Endothelial cell of umbilical vein (primary cell): ENCODE measurements at regions of chr2 and their contacts with region 1.

Region 1: DNA sequence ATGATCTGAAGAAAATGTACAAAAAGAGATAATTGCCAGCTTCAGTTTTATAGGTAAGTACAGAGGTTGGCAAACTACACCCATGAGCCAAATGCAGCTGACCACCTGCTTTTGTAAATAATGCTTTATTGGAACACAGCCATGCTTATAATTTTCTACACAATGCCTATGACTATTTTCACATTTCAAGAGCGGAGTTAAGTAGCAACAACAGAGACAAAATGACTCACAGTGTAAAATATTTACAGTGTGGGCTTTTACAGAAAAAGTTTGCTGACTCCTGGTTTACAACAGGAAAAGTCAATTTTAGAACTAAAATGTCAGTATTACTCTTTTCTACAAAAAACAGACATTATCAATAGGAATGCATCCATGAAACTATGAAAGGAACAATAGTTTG is 26.0 kb downstream of the CWC22 start:
- DNase-seq: peak; percentile 55
- H3K4me3 ChIP-seq: no peak overlapping the region
- H3K27ac ChIP-seq: no peak overlapping the region
- H3K4me1 ChIP-seq: peaks cover 2% of the 10 kb centered on the region
- H3K27me3 ChIP-seq: no peaks in the 10 kb centered on the region
- CTCF ChIP-seq: no peak
- POLR2A ChIP-seq: no peak

Region 2: DNA sequence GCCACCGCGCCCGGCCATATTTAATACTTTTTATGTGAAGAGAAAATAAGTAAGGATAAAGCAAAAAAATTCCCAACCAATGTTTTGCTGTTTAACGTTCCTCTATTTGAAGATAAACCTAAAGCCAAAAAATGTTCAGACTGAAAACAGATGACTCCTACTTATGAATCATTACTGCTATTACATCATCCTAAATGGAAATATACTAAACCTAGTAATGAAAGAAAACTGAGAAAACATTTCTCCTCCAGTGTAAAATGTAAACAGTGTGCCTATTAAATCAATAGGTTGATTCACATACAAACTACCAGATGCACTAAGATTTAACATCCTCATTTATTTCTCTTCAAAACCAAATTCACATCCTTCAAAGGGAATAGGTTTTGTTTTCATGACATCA is 17.5 kb before region 1 on chr2:
- CTCF ChIA-PET with region 1: interaction called, 3 read pairs
- POLR2A ChIA-PET with region 1: no interaction called
- dilution Hi-C with region 1: no loop called
- intact Hi-C with region 1: loop called (anchors 2 kb)
- DNase-seq: peak; percentile 11
- H3K4me3 ChIP-seq: no peak overlapping the region
- H3K27ac ChIP-seq: no peak overlapping the region
- H3K4me1 ChIP-seq: no peaks in the 10 kb centered on the region
- H3K27me3 ChIP-seq: no peaks in the 10 kb centered on the region
- CTCF ChIP-seq: no peak
- POLR2A ChIP-seq: no peak

Region 3: GRCh38 chr2:179991344-179991743 is 10.3 kb after region 1 on chr2:
- CTCF ChIA-PET with region 1: no interaction called
- POLR2A ChIA-PET with region 1: no interaction called
- dilution Hi-C with region 1: no loop called
- intact Hi-C with region 1: no loop called
- DNase-seq: no peak
- H3K4me3 ChIP-seq: no peak overlapping the region
- H3K27ac ChIP-seq: no peak overlapping the region
- H3K4me1 ChIP-seq: no peaks in the 10 kb centered on the region
- H3K27me3 ChIP-seq: no peaks in the 10 kb centered on the region
- CTCF ChIP-seq: no peak
- POLR2A ChIP-seq: no peak